Endothelial cell of umbilical vein (primary cell): ENCODE measurements at regions of chr5 and their contacts with region 1.

Region 1: GRCh38 chr5:141338538-141339306 is at the start of gene PCDHGA2:
- DNase-seq: peak; percentile 59
- H3K4me3 ChIP-seq: peak within 1 kb of the TSS in 2 of 3 experiments; percentile 16 to 53
- H3K27ac ChIP-seq: no peak within 1 kb of the TSS
- H3K4me1 ChIP-seq: no peaks in the 10 kb centered on the region
- H3K27me3 ChIP-seq: peaks cover 15 to 66% of the 10 kb centered on the region in 2 experiments
- CTCF ChIP-seq: peak; percentile 43 to 54
- POLR2A ChIP-seq: no peak
- total RNA-seq, gene PCDHGA2: 0.58 and 1.2 TPM in 2 replicates

Region 2: GRCh38 chr5:141298376-141298775 is 40.3 kb before region 1 on chr5:
- CTCF ChIA-PET with region 1: no interaction called
- POLR2A ChIA-PET with region 1: no interaction called
- dilution Hi-C with region 1: no loop called
- intact Hi-C with region 1: no loop called
- DNase-seq: no peak
- H3K4me3 ChIP-seq: no peak overlapping the region
- H3K27ac ChIP-seq: no peak overlapping the region
- H3K4me1 ChIP-seq: no peaks in the 10 kb centered on the region
- H3K27me3 ChIP-seq: no peaks in the 10 kb centered on the region
- CTCF ChIP-seq: no peak
- POLR2A ChIP-seq: no peak

Region 3: GRCh38 chr5:141320225-141321169 is 18.2 kb before region 1 on chr5 and contains the start of gene TAF7:
- CTCF ChIA-PET with region 1: interaction called, 11 read pairs
- POLR2A ChIA-PET with region 1: interaction called, 3 read pairs
- dilution Hi-C with region 1: no loop called
- intact Hi-C with region 1: loop called (anchors 2 kb)
- DNase-seq: peak; percentile 91
- H3K4me3 ChIP-seq: peak within 1 kb of the TSS; percentile 56 to 91 (median 87)
- H3K27ac ChIP-seq: peak within 1 kb of the TSS; percentile 91
- H3K4me1 ChIP-seq: no peaks in the 10 kb centered on the region
- H3K27me3 ChIP-seq: no peaks in the 10 kb centered on the region
- CTCF ChIP-seq: peak; percentile 78 to 88
- POLR2A ChIP-seq: peak; percentile 94
- total RNA-seq, gene TAF7: 55.0 and 62.0 TPM in 2 replicates

Region 4: DNA sequence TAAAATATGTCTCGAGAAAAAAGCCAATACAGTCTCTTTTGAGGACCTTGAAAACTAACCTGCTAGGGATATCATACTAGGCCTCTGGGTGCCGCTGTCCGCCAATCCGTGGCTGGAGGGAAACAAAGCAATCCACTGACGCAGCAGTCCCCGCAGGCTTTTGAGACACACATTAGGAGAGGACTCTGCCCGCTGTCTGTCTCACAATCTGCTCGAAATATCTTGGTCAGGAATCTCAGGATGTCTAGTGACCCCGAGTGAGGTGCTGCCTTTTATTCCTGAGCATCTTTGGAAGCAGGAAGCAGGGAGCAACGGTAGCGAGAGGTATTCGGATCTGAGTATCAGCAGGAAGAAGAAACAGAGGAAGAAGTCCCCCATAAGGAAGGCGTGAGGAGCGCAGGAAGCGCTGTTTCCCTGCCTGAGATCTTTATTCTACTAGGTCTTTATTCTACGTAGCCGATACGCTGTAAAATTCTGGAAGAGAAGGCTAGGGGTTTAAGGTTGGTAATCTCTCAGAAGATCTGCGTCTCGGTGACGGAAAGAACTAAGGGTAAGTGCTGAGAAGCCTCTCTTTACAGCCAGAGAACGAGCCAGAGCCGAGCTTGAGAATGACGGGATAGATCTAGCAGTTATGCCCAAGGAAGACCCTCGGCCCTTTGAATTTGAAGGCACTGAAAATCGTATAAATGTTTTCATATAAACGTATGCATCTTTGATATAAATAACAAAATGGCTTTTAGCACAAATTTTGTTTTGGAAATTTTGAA is 12.5 kb before region 1 on chr5:
- CTCF ChIA-PET with region 1: interaction called, 23 read pairs
- POLR2A ChIA-PET with region 1: no interaction called
- dilution Hi-C with region 1: no loop called
- intact Hi-C with region 1: loop called (anchors 2 kb)
- DNase-seq: peak; percentile 77
- H3K4me3 ChIP-seq: peak overlapping the region; percentile 27 to 74 (median 50)
- H3K27ac ChIP-seq: no peak overlapping the region
- H3K4me1 ChIP-seq: no peaks in the 10 kb centered on the region
- H3K27me3 ChIP-seq: peaks cover 14 to 31% of the 10 kb centered on the region in 2 experiments
- CTCF ChIP-seq: peak; percentile 65 to 70
- POLR2A ChIP-seq: no peak

Region 5: GRCh38 chr5:141349917-141350619 is 11.3 kb after region 1 on chr5 and contains the start of gene PCDHGB1:
- CTCF ChIA-PET with region 1: interaction called, 29 read pairs
- POLR2A ChIA-PET with region 1: no interaction called
- dilution Hi-C with region 1: no loop called
- intact Hi-C with region 1: no loop called
- DNase-seq: no peak
- H3K4me3 ChIP-seq: no peak within 1 kb of the TSS
- H3K27ac ChIP-seq: no peak within 1 kb of the TSS
- H3K4me1 ChIP-seq: no peaks in the 10 kb centered on the region
- H3K27me3 ChIP-seq: peaks cover 25 to 48% of the 10 kb centered on the region in 2 experiments
- CTCF ChIP-seq: peak; percentile 41 to 44
- POLR2A ChIP-seq: no peak
- total RNA-seq, gene PCDHGB1: 0.58 and 0.62 TPM in 2 replicates

Region 6: DNA sequence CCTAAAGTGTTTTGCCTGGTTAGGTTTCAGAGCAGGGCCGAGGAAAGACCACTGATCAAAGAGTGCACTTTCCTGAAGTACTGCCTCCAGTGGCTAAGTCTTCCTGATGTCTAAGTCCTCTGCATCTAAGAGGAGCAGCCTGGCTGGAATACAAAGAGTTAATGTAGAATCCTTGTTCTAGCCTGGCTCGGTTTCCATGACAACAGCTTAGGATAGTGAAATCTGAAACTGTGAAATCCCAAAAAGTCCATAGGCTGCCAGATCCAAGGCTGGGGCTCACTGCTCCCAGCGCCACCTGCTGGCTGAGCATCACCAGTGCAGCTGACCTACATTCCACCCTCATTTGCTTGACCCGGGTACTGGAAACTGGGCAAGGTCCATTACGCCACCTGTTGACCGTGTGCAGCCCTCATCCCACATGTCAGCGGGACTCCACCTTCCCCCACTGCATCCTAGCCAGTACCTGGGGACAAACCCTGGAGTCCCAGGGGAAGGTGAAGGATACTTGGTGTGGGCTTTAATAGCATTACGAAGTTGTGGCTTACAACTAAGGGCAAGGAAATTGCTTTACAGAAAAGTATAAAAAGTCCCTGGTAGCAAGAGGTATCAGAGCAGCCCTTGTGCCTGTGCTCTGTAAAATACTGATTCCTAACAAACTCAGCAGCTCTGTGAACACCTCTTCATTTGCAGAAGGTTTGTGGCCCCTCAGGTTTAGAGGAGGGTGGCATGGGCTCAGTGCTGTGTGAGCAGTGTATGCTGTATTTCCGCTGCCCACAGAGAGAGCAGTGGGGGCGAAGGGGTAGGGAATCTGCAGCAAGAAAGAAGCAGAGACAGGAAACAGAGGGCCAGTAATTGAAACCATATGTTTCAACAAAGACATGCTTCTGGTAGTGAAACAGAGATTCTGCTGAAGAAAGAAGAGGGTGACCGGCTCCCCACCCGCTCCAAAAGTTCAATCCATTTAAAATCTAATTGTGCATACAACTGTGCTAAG is 186.2 kb after region 1 on chr5:
- CTCF ChIA-PET with region 1: interaction called, 4 read pairs
- POLR2A ChIA-PET with region 1: no interaction called
- dilution Hi-C with region 1: no loop called
- intact Hi-C with region 1: loop called (anchors 5 kb)
- DNase-seq: peak; percentile 96
- H3K4me3 ChIP-seq: no peak overlapping the region
- H3K27ac ChIP-seq: peak overlapping the region; percentile 22
- H3K4me1 ChIP-seq: peaks cover 29% of the 10 kb centered on the region
- H3K27me3 ChIP-seq: no peaks in the 10 kb centered on the region
- CTCF ChIP-seq: peak; percentile 99 to 100
- POLR2A ChIP-seq: no peak